Naive thymus-derived CD8-positive, alpha-beta T cell (primary cell): ENCODE measurements at regions of chr13 and their contacts with region 1.

Region 1: DNA sequence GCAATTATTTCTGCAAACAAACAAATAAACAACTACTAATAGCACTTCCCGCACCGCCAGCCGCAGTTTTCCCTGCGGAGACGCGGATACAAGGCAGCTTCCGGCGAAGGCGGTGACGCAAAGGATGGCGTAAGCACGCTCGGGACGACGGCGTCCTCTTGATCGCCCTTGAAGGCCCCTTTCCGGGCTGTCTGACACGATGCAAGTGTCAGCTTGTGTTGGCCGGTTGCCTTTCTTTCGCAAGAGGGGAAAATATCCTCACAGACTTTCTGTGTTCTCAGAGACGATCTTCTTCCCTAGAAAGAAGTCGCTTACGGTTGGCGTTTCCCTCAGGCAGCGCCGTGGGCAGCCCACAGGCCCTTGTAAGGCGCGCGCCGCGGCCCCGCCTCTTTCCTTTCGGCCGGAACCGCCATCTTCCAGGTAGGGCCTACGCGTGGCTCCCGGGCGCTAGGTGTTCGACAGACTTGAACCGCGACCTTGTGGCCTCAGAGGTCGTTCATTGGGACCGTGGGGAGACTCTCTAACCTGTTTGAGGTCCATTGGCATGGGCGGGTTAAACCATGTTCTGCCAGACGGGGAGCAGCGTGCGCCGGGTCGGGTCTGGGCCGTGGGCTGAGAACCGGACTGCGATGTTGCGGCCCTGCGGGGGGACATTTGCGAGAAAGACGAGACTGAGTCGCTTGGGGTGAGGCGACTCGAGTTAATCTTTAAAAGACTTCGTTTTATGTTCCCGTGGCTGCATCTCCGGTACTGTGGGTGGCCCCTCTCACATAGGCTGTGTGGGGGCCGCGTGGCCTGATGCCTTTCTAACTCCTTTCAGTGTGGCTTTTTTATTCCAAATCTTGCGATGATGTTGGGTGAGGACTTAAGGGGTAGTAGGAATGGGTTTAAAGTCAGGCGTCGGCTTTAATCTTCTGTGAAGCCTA is at the start of gene RPL21:
- DNase-seq: peak; percentile 84 to 99 (median 92)
- ATAC-seq: peak; percentile 89 to 91
- H3K4me3 Mint-ChIP-seq: peak within 1 kb of the TSS; percentile 89 to 99 (median 98)
- H3K27ac Mint-ChIP-seq: peak within 1 kb of the TSS; percentile 99 to 100 (median 100)
- H3K4me1 Mint-ChIP-seq: peaks cover 28 to 55% (median 51%) of the 10 kb centered on the region in 4 donors
- H3K27me3 Mint-ChIP-seq: no peaks in the 10 kb centered on the region
- polyA plus RNA-seq, gene RPL21: 7,933 to 9,149 (median 9,080) TPM

Region 2: GRCh38 chr13:27125357-27126282 is 125.8 kb before region 1 on chr13:
- POLR2A ChIA-PET with region 1: no interaction called
- DNase-seq: no peak
- ATAC-seq: no peak
- H3K4me3 Mint-ChIP-seq: peak overlapping the region in 3 of 10 donors; percentile 14 to 36 (median 16)
- H3K27ac Mint-ChIP-seq: peak overlapping the region in 1 of 10 donors; percentile 17
- H3K4me1 Mint-ChIP-seq: peaks cover 19 to 67% (median 64%) of the 10 kb centered on the region in 4 donors
- H3K27me3 Mint-ChIP-seq: no peaks in the 10 kb centered on the region

Region 3: GRCh38 chr13:27171827-27172494 is 79.5 kb before region 1 on chr13:
- POLR2A ChIA-PET with region 1: interaction called, 11 read pairs
- DNase-seq: peak; percentile 86 to 95 (median 90)
- ATAC-seq: peak; percentile 86
- H3K4me3 Mint-ChIP-seq: peak overlapping the region; percentile 80 to 94 (median 90)
- H3K27ac Mint-ChIP-seq: peak overlapping the region; percentile 87 to 97 (median 96)
- H3K4me1 Mint-ChIP-seq: peaks cover 15 to 57% (median 43%) of the 10 kb centered on the region in 4 donors
- H3K27me3 Mint-ChIP-seq: no peaks in the 10 kb centered on the region

Region 4: DNA sequence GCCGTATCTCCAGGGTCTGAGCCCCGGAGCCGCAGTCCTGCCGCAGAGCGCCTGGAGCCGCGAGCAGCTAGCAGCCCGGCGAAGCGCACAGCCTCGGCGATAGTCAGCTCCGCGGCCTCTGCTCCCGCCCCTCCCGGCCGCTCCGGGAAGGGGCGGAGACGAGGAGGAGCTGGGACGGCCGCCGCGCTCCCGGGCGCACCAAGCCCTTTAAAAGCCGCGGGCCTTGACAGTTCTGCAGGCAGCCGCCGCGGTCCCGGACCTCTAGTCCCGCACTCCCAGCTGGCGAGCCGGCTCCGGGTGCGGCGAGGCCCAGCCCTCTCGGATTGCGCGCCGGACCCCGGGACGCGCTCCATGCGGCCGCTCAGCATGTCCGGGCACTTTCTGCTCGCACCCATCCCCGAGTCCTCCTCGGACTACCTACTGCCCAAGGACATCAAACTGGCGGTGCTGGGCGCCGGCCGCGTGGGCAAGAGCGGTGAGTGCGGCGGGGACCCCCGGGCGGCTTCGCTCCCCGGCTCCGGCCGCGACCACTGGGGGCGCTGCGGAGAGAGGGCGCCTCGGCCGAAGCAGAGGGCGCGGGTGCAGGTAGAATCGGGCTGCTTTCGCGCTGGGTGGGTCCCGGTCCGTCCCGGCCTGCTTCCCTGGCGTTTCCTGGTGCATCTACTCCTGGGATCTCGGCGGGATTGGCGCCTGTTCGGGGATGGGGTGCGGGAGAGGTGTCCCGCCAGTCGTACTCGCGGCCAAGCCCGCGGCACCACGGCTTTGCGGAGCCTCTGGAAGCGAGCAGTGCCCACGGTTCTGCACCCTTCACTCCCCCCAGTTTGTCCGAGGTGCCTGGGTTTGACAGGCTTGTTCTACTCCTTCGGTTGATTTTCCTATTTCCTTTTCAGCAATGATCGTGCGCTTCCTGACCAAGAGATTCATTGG is 19.4 kb after region 1 on chr13 and contains the start of gene RASL11A:
- POLR2A ChIA-PET with region 1: interaction called, 14 read pairs
- DNase-seq: peak; percentile 49 to 85 (median 78)
- ATAC-seq: peak; percentile 92 to 93
- H3K4me3 Mint-ChIP-seq: peak within 1 kb of the TSS; percentile 87 to 94 (median 92)
- H3K27ac Mint-ChIP-seq: peak within 1 kb of the TSS; percentile 18 to 93 (median 86)
- H3K4me1 Mint-ChIP-seq: peaks cover 17 to 34% (median 27%) of the 10 kb centered on the region in 4 donors
- H3K27me3 Mint-ChIP-seq: peaks cover 0 to 16% (median 3%) of the 10 kb centered on the region in 5 donors
- polyA plus RNA-seq, gene RASL11A: 0.20 to 3.3 (median 1.7) TPM

Region 5: DNA sequence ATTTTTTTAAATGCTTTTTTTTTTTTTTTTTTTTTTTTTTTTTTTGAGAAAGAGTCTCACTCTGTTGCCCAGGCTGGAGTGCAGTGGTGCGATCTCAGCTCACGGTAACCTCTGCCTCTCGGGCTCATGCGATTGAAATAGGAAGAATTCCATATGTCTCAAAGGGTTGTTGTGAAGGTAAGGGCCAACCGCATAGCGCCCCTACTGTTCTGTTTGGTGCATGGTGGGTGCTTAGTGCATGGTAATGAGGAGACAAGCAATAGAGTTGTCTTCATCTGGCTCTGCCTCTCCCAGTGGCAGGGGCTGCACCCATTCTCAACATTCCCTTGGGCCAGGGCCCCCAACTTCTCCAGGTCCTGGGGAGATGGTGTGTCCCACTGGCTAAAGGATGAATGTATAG is 87.9 kb after region 1 on chr13:
- POLR2A ChIA-PET with region 1: interaction called, 10 read pairs
- DNase-seq: peak in 9 of 10 donors; percentile 10 to 75 (median 39)
- ATAC-seq: peak; percentile 88 to 91
- H3K4me3 Mint-ChIP-seq: peak overlapping the region in 3 of 10 donors; percentile 41 to 60 (median 53)
- H3K27ac Mint-ChIP-seq: peak overlapping the region in 2 of 10 donors; percentile 4 to 27
- H3K4me1 Mint-ChIP-seq: peaks cover 0 to 7% (median 2%) of the 10 kb centered on the region in 4 donors
- H3K27me3 Mint-ChIP-seq: peaks cover 0 to 10% (median 3%) of the 10 kb centered on the region in 5 donors

Region 6: DNA sequence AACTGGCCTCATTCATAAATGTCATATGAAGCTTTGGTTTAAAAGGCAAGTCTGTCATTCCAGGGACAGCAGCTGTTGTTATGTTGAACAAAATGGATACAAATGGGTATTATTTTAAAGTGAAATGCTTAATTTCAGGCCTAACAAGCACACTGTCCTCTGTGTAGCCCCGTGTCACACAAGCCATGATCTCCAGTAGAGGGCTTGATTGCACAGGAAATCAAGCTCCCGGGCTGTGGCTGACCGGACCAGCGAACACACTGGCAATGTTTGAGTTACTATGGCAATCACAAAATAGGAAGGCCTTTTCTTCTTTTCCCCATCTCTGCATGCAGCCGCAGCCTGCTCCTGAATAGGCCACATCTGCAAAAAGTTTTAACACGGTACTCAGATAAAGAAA is 476.8 kb after region 1 on chr13:
- POLR2A ChIA-PET with region 1: no interaction called
- DNase-seq: no peak
- ATAC-seq: no peak
- H3K4me3 Mint-ChIP-seq: no peak overlapping the region
- H3K27ac Mint-ChIP-seq: peak overlapping the region in 1 of 10 donors; percentile 34
- H3K4me1 Mint-ChIP-seq: peaks cover 4 to 11% (median 5%) of the 10 kb centered on the region in 4 donors
- H3K27me3 Mint-ChIP-seq: peaks cover 0 to 10% (median 5%) of the 10 kb centered on the region in 5 donors